ENCODE measurements at regions of chr12 and their contacts with region 1.

Region 1: GRCh38 chr12:84912198-84913128 is at the start of gene SLC6A15:
- DNase-seq: peak in 1 of 2 experiments; percentile 88
- H3K4me3 ChIP-seq: peak within 1 kb of the TSS; percentile 69 to 93 (median 86)
- H3K27ac ChIP-seq: no peak within 1 kb of the TSS; the same call in 1 of the 2 replicates
- H3K4me1 ChIP-seq: peaks cover 0 to 6% (median 0%) of the 10 kb centered on the region in 4 experiments; a peak in 1 of 7 replicates
- H3K27me3 ChIP-seq: no peaks in the 10 kb centered on the region
- CTCF ChIP-seq: peak; percentile 44 to 73 (median 64)
- EP300 ChIP-seq: no peak
- POLR2A ChIP-seq: peak in 1 of 2 experiments; percentile 73; a peak in 1 of 3 replicates
- RAD21 ChIP-seq: peak in 1 of 2 experiments; percentile 43; a peak in 2 of 4 replicates
- total RNA-seq, gene SLC6A15: 38.1 and 42.0 TPM in 2 replicates

Region 2: DNA sequence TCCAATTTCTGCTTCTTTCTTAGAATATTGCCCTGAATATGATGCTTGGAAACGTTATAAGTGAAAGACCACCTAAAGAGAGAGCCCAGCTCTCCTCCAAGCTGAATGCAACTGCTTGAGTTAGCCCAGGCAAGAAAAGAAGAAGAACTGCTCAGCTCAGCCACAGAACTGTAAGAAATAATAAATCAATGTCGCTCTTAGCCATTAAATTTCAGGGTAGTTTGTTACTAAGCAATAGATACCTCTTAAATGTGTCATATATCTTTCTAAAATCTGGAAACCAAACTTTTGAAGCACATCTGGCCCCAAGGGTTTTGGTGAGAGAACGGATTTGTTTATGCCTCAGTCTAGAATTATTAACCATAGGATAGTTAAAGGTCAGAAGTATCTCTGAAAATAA is 50.3 kb before region 1 on chr12:
- CTCF ChIA-PET with region 1: no interaction called
- POLR2A ChIA-PET with region 1: no interaction called
- DNase-seq: no peak
- H3K4me3 ChIP-seq: no peak overlapping the region
- H3K27ac ChIP-seq: no peak overlapping the region
- H3K4me1 ChIP-seq: no peaks in the 10 kb centered on the region
- H3K27me3 ChIP-seq: no peaks in the 10 kb centered on the region
- CTCF ChIP-seq: no peak
- EP300 ChIP-seq: no peak
- POLR2A ChIP-seq: no peak
- RAD21 ChIP-seq: no peak

Region 3: DNA sequence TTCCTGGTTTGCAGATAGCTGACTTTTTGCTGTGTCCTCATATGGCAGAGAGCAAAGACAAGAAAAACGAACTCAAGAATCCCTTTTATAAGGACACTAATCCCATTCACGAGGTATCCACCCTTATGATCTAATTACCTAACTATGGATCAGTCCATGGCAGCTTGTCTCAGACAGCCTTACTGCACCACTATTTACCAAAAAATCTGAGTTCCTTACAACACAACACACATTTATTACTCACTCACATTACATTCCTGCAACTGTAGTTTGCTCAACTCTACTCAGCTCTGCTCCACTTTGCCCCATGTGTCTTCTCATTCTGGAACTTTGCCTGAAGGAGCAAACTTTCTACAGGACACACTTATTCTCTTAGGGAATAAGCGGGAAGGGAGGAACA is 10.3 kb after region 1 on chr12:
- CTCF ChIA-PET with region 1: interaction called, 10 read pairs
- POLR2A ChIA-PET with region 1: interaction called, 8 read pairs
- DNase-seq: no peak
- H3K4me3 ChIP-seq: no peak overlapping the region
- H3K27ac ChIP-seq: no peak overlapping the region
- H3K4me1 ChIP-seq: no peaks in the 10 kb centered on the region
- H3K27me3 ChIP-seq: no peaks in the 10 kb centered on the region
- CTCF ChIP-seq: no peak
- EP300 ChIP-seq: no peak
- POLR2A ChIP-seq: no peak
- RAD21 ChIP-seq: no peak

Region 4: DNA sequence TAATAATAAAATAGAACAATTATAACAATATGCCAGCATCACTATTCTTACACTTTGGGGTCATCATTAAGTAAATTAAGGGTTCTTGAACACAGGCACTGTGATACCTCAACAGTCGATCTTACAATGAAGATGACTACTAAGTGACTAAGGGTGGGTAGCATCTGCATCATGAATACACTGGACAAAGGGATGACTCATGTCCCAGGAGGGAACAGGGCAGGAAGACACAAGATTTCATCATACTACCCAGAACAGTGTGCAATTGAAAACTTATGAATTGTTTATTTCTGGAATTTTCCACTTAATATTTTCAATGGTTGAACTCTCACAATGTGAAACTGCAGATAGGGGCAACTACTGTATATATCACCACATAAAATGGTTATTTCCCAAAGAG is 104.0 kb after region 1 on chr12:
- CTCF ChIA-PET with region 1: no interaction called
- POLR2A ChIA-PET with region 1: no interaction called
- DNase-seq: no peak
- H3K4me3 ChIP-seq: no peak overlapping the region
- H3K27ac ChIP-seq: no peak overlapping the region
- H3K4me1 ChIP-seq: no peaks in the 10 kb centered on the region
- H3K27me3 ChIP-seq: no peaks in the 10 kb centered on the region
- CTCF ChIP-seq: no peak
- EP300 ChIP-seq: no peak
- POLR2A ChIP-seq: no peak
- RAD21 ChIP-seq: no peak

Region 5: DNA sequence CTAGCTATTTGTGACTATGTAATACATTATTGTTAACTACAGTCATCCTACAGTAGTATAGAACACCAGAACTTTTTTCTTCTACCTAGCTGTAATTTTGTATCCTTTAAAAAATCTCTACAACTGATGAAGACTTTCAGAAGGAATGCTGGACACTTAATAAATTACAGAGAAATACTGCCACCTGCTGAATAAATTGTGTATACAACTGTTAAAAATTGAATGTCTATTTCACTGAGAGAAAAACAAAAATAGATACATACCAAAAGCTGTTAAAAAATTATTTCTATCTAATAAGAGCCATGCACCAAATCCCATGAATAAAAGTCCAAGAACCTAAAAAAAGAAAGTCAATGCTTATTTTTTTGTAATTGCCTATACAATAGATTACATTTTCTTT is 117.0 kb after region 1 on chr12:
- CTCF ChIA-PET with region 1: interaction called, 26 read pairs
- POLR2A ChIA-PET with region 1: interaction called, 4 read pairs
- DNase-seq: no peak
- H3K4me3 ChIP-seq: no peak overlapping the region
- H3K27ac ChIP-seq: no peak overlapping the region
- H3K4me1 ChIP-seq: no peaks in the 10 kb centered on the region
- H3K27me3 ChIP-seq: peaks cover 0 to 2% (median 0%) of the 10 kb centered on the region in 4 experiments; a peak in 1 of 7 replicates
- CTCF ChIP-seq: peak in 1 of 3 experiments; percentile 24; a peak in 1 of 4 replicates
- EP300 ChIP-seq: no peak
- POLR2A ChIP-seq: no peak
- RAD21 ChIP-seq: peak in 1 of 2 experiments; percentile 62; a peak in 3 of 4 replicates

Measured in H1 (cell line).